ENCODE measurements at regions of chr14 and their contacts with region 1.

Region 1: DNA sequence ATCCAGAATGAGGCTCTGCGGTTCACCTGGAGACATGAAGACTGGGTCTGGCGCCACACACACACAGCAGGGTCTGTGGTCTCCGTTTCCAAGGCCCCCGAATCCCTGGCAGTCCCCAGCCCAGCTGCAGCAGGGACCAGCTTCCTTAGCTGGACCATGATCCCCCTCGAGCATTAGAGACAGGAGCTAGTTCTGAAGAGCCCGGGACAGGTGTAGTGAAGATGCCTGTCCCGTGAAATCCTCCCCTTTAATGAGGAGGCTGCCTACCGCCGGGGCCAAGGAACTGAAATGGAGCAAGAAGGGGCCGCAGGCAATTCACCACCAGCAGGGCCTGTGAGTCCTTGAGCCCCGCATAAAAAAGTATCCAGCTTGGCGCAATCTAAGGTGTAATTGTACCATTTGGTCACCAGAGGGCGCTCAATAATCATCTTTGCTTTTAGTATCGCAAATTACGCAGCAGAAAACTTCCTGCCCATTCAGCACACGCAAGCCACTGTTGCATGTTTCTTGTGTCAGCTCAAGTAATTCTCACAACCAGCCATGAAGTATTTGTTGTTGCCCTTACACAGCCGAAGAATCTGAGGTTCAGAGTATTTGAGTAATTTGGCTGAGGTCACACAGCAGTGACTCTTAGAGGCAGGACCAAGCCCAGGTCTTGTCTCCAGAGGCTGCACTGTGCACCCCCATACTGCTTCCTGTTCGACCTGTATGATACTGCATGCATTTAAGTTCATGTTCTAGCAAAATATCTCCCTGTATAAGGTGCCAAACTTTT is 54.3 kb upstream of the PPP2R5C start:
- DNase-seq: peak; percentile 70
- ATAC-seq: peak; percentile 72
- H3K4me3 ChIP-seq: peak overlapping the region in 1 of 2 experiments; percentile 36; a peak in 2 of 4 replicates
- H3K27ac ChIP-seq: no peak overlapping the region
- H3K4me1 ChIP-seq: peaks cover 7 to 32% of the 10 kb centered on the region in 2 experiments
- H3K27me3 ChIP-seq: no peaks in the 10 kb centered on the region
- CTCF ChIP-seq: peak; percentile 56 to 85 (median 81); a peak in 5 of 6 replicates
- POLR2A ChIP-seq: no peak
- RAD21 ChIP-seq: peak; percentile 98

Region 2: GRCh38 chr14:101774006-101774795 is 66.9 kb after region 1 on chr14:
- CTCF ChIA-PET with region 1: interaction called, 24 read pairs
- POLR2A ChIA-PET with region 1: interaction called, 3 read pairs
- RAD21 ChIA-PET with region 1: interaction called in 1 of 2 experiments, 9 read pairs
- intact Hi-C with region 1: loop called (anchors 2 kb)
- DNase-seq: no peak
- ATAC-seq: no peak
- H3K4me3 ChIP-seq: no peak overlapping the region
- H3K27ac ChIP-seq: no peak overlapping the region
- H3K4me1 ChIP-seq: no peaks in the 10 kb centered on the region; a peak in 1 of 4 replicates
- H3K27me3 ChIP-seq: no peaks in the 10 kb centered on the region
- CTCF ChIP-seq: no peak
- POLR2A ChIP-seq: no peak
- RAD21 ChIP-seq: no peak

Region 3: GRCh38 chr14:101843665-101844064 is 136.4 kb after region 1 on chr14:
- CTCF ChIA-PET with region 1: no interaction called
- POLR2A ChIA-PET with region 1: no interaction called
- RAD21 ChIA-PET with region 1: no interaction called
- intact Hi-C with region 1: loop called (anchors 1 kb)
- DNase-seq: no peak
- ATAC-seq: no peak
- H3K4me3 ChIP-seq: no peak overlapping the region
- H3K27ac ChIP-seq: no peak overlapping the region
- H3K4me1 ChIP-seq: no peaks in the 10 kb centered on the region
- H3K27me3 ChIP-seq: no peaks in the 10 kb centered on the region
- CTCF ChIP-seq: peak; percentile 5 to 41 (median 15); a peak in 3 of 6 replicates
- POLR2A ChIP-seq: no peak
- RAD21 ChIP-seq: peak; percentile 39

Region 4: DNA sequence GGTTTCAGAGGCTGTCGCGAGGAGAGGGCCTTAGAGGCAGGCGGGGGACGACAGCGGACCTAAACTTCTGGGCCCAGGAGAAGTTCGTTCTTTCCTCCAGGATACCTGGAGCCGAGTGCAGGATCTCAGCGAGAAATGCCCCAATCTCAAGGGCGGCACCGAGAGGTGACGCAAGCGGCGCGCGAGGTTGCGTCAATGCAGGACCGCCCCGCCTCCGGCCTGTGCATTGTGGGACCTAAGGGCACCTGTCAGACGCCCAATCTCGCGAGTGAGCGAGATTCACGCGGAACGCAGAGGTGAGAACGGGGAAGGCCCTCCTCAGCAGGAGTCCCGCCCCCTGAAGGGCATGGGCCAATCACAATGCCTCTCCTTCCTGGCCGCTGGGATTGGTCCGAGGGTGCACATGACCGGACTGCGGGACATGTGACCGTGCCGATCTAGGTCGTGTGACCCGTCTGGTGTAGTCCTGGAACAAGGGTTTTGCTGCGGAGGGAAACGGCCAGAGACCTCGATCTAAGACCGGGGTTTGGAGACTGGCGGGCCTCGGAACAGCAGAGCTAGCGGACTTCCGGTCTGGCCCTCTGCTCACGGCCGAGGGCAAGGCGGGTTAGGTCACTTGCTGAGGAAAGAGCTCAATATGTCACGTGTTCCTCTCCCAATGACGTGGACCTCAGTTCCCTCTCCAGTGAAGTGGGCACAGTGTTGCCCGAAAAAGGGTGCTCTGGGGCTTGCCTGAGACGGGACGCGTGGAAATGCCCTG is 240.8 kb after region 1 on chr14:
- CTCF ChIA-PET with region 1: interaction called, 4 read pairs
- POLR2A ChIA-PET with region 1: no interaction called
- RAD21 ChIA-PET with region 1: no interaction called
- intact Hi-C with region 1: loop called (anchors 1 kb)
- DNase-seq: peak; percentile 100
- ATAC-seq: peak; percentile 98
- H3K4me3 ChIP-seq: peak overlapping the region; percentile 82 to 92
- H3K27ac ChIP-seq: peak overlapping the region; percentile 76
- H3K4me1 ChIP-seq: peaks cover 5 to 7% of the 10 kb centered on the region in 2 experiments
- H3K27me3 ChIP-seq: no peaks in the 10 kb centered on the region
- CTCF ChIP-seq: no peak
- POLR2A ChIP-seq: peak; percentile 93
- RAD21 ChIP-seq: no peak

Region 5: GRCh38 chr14:102046343-102047278 is 339.4 kb after region 1 on chr14:
- CTCF ChIA-PET with region 1: no interaction called
- POLR2A ChIA-PET with region 1: no interaction called
- RAD21 ChIA-PET with region 1: no interaction called
- intact Hi-C with region 1: loop called (anchors 5 kb)
- DNase-seq: peak; percentile 82
- ATAC-seq: peak; percentile 99
- H3K4me3 ChIP-seq: no peak overlapping the region
- H3K27ac ChIP-seq: peak overlapping the region; percentile 29
- H3K4me1 ChIP-seq: peaks cover 0 to 10% of the 10 kb centered on the region in 2 experiments; a peak in 2 of 4 replicates
- H3K27me3 ChIP-seq: no peaks in the 10 kb centered on the region
- CTCF ChIP-seq: peak; percentile 78 to 99 (median 80)
- POLR2A ChIP-seq: no peak
- RAD21 ChIP-seq: peak; percentile 94

Region 6: GRCh38 chr14:102096214-102097114 is 389.2 kb after region 1 on chr14:
- CTCF ChIA-PET with region 1: interaction called, 6 read pairs
- POLR2A ChIA-PET with region 1: no interaction called
- RAD21 ChIA-PET with region 1: interaction called in 1 of 2 experiments, 3 read pairs
- intact Hi-C with region 1: loop called (anchors 2 kb)
- DNase-seq: peak; percentile 50
- ATAC-seq: peak; percentile 86
- H3K4me3 ChIP-seq: no peak overlapping the region
- H3K27ac ChIP-seq: no peak overlapping the region
- H3K4me1 ChIP-seq: peaks cover 26 to 32% of the 10 kb centered on the region in 2 experiments
- H3K27me3 ChIP-seq: no peaks in the 10 kb centered on the region
- CTCF ChIP-seq: peak; percentile 73 to 96 (median 85)
- POLR2A ChIP-seq: no peak
- RAD21 ChIP-seq: peak; percentile 96

Region 7: GRCh38 chr14:102437997-102438915 is 731.0 kb after region 1 on chr14:
- CTCF ChIA-PET with region 1: no interaction called
- POLR2A ChIA-PET with region 1: no interaction called
- RAD21 ChIA-PET with region 1: no interaction called
- intact Hi-C with region 1: no loop called
- DNase-seq: peak; percentile 59
- ATAC-seq: peak; percentile 98
- H3K4me3 ChIP-seq: peak overlapping the region; percentile 18 to 37; a peak in 2 of 4 replicates
- H3K27ac ChIP-seq: no peak overlapping the region
- H3K4me1 ChIP-seq: peaks cover 2 to 11% of the 10 kb centered on the region in 2 experiments; a peak in 3 of 4 replicates
- H3K27me3 ChIP-seq: no peaks in the 10 kb centered on the region
- CTCF ChIP-seq: peak; percentile 76 to 81 (median 76)
- POLR2A ChIP-seq: no peak
- RAD21 ChIP-seq: peak; percentile 94

Measured in HCT116 (cell line).